OCI-LY7 (cell line): ENCODE measurements at regions of chr19 and their contacts with region 1.

Region 1: DNA sequence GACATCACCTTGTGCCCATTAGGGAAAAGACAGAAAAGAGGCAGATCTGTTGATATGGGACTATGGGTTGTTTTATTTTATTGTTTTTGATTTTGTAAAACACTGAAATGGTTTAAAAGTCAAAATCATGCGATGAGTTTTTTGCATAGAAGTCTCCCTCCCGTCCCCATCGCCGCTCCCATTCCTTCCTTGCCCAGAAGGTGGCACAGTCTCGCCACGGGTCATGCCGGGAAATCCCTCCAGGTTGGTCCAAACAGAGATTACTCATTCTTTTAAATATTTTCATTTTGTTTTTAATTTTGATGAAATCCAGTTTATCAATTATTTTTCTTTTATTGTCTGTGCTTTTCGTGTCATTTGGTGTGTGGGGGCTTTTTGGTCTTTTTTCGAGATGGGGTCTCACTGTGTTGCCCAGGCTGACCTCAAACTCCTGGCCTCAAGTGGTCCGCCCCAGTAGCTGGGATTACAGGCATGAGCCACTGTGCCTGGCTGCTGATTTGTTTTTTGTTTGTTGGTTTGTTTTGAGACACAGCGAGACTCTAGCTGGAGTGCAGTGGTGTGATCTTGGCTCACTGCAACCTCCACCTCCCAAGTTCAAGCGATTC is 9.2 kb downstream of the PGPEP1 start:
- DNase-seq: peak; percentile 40
- H3K4me3 ChIP-seq: no peak overlapping the region
- H3K27ac ChIP-seq: no peak overlapping the region
- H3K4me1 ChIP-seq: no peaks in the 10 kb centered on the region
- CTCF ChIP-seq: peak; percentile 82

Region 2: DNA sequence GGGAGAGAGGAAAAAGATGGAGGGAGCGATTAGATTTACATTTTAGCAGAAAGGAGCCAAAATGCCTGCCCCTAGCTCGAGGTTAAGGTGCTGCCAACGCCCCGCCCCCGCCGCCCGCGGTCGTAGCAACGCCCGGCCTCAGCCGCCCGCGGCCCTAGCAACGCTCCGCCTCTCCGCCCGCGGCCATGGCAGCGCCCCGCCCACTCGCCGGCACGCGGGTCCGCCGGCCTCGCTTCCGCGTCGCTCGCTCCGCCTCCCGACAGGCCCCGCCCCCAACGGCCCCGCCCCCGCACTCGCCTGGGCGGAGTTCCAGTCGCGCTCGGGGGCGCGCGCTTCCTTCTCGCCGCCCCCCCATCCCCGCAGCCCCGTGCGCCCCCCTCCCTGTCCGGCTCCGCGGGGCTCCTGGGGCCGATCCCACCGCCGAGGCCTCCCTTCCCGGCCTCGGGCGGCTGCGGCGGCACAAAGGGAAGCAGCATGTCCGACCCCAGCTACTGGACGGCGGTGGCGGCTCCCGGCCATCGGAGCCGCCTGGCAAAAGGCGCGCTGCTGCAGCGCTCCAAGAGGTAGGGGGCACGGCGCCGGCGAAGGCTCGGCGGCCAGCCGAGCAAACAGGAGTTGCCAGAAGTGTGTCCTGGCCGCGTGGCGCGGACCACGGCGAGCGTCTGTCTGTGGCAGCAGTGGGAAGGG is 231.8 kb before region 1 on chr19:
- CTCF ChIA-PET with region 1: no interaction called
- POLR2A ChIA-PET with region 1: no interaction called
- intact Hi-C with region 1: no loop called
- DNase-seq: peak; percentile 93
- H3K4me3 ChIP-seq: peak overlapping the region; percentile 73
- H3K27ac ChIP-seq: peak overlapping the region; percentile 70
- H3K4me1 ChIP-seq: peaks cover 35% of the 10 kb centered on the region
- CTCF ChIP-seq: no peak

Region 3: DNA sequence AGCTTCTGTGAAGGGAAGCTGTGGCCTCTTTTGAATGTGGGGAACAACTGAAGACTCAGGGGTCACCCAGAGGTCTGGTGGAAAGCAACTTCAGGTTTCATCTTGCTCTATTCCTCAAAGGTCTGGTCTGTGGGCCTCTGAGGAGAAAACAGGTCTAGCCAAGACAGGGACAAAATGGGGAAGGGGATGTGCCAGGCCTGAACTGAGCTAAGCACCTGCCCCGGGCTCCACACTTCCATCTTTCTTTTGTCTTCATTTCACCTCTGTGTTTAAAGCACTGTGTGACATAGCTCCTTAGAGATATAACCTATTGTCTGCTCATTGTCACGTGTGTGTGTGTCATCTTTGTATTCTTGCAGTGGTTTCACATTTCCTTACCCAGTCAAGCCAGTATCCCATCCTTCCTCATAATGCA is 16.4 kb after region 1 on chr19:
- CTCF ChIA-PET with region 1: no interaction called
- POLR2A ChIA-PET with region 1: no interaction called
- intact Hi-C with region 1: no loop called
- DNase-seq: no peak
- H3K4me3 ChIP-seq: no peak overlapping the region
- H3K27ac ChIP-seq: no peak overlapping the region
- H3K4me1 ChIP-seq: peaks cover 9% of the 10 kb centered on the region
- CTCF ChIP-seq: no peak

Region 4: DNA sequence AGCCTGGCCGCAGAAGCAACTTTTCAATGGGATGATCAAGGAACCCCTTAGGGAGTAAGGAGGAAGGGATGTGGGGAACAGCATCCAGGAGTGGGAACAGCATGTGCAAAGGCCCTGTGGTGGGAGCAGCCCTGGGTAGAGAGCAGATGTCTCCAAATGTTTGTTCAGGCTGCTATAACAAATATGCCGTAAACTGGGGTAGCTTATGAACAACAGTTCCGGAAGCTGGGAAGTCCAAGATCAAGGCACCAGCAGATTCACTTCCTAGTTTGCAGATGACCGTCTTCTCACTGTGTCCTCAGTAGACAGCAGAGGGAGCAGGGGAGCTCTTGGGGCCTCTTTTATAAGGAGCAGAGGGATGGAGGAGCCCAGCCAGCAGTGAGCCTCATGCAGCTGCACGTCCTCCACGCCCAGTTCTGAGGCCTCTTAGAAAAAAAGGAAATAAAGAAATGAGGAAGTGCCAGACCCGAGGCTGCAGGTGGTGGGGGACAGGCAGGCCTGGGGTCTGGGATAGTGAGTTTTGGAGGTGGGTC is 52.0 kb after region 1 on chr19:
- CTCF ChIA-PET with region 1: no interaction called
- POLR2A ChIA-PET with region 1: no interaction called
- intact Hi-C with region 1: loop called (anchors 2 kb)
- DNase-seq: peak; percentile 96
- H3K4me3 ChIP-seq: peak overlapping the region; percentile 56
- H3K27ac ChIP-seq: peak overlapping the region; percentile 75
- H3K4me1 ChIP-seq: peaks cover 58% of the 10 kb centered on the region
- CTCF ChIP-seq: peak; percentile 78